CD8-positive, alpha-beta T cell (primary cell): ENCODE measurements at regions of chr2 and their contacts with region 1.

Region 1: DNA sequence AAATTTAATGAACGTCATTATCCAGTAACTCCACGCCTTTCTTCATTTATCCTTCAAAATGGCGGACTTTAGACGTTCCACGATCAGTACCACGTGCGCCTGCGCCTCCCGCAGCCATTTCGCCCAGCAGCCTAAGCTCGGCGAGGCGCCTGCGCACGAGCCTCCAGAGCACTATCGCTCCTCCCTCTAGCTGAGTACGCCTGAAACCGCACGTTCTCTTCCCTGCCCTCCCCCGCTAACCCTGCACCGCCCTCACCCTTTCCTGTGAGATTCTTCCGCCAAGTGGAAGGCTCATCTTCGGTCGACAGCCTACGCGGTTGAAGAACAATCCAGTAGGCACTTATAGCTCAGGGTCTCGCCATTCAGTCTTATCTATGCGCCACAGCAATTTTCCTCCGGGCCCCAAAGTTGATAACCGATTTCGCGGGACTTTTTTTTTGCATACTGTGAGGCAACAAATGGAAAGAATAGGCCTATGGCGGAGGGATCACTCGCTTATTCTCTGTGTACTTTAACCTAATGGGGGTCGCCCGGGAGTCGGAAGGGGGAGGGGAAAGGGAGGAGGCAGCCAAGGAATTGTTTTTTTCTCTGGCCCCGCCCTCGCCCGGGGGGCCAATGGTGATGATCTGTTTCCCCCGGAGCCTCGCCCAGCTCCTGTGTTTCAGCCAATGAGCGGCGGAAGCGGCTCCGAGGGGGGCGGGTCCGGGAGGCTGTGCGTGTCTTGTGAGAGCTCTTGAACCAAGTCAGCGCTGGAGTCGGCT is at the start of gene KDM3A:
- DNase-seq: peak; percentile 98 to 100 (median 99)
- ATAC-seq: peak; percentile 76
- H3K4me3 ChIP-seq: peak within 1 kb of the TSS; percentile 74 to 80
- H3K4me3 Mint-ChIP-seq: peak within 1 kb of the TSS; percentile 97
- H3K27ac ChIP-seq: peak within 1 kb of the TSS; percentile 85 to 91
- H3K27ac Mint-ChIP-seq: peak within 1 kb of the TSS; percentile 99
- H3K4me1 ChIP-seq: peaks cover 31% of the 10 kb centered on the region
- H3K4me1 Mint-ChIP-seq: peaks cover 44% of the 10 kb centered on the region
- H3K27me3 ChIP-seq: no peaks in the 10 kb centered on the region
- H3K27me3 Mint-ChIP-seq: no peaks in the 10 kb centered on the region
- CTCF ChIP-seq: no peak
- total RNA-seq, gene KDM3A: 226 to 227 TPM

Region 2: GRCh38 chr2:86105252-86105968 is 335.4 kb before region 1 on chr2 and contains the start of gene POLR1A:
- CTCF ChIA-PET with region 1: no interaction called
- POLR2A ChIA-PET with region 1: interaction called, 18 read pairs
- intact Hi-C with region 1: loop called in 1 of 2 experiments (anchors 2 kb)
- DNase-seq: peak; percentile 64 to 94 (median 83)
- ATAC-seq: peak; percentile 77
- H3K4me3 ChIP-seq: peak within 1 kb of the TSS; percentile 66 to 92
- H3K4me3 Mint-ChIP-seq: peak within 1 kb of the TSS; percentile 92
- H3K27ac ChIP-seq: peak within 1 kb of the TSS; percentile 80 to 87
- H3K27ac Mint-ChIP-seq: peak within 1 kb of the TSS; percentile 99
- H3K4me1 ChIP-seq: peaks cover 24% of the 10 kb centered on the region
- H3K4me1 Mint-ChIP-seq: peaks cover 66% of the 10 kb centered on the region
- H3K27me3 ChIP-seq: no peaks in the 10 kb centered on the region
- H3K27me3 Mint-ChIP-seq: no peaks in the 10 kb centered on the region
- CTCF ChIP-seq: no peak
- total RNA-seq, gene POLR1A: 12.3 to 15.2 TPM

Region 3: DNA sequence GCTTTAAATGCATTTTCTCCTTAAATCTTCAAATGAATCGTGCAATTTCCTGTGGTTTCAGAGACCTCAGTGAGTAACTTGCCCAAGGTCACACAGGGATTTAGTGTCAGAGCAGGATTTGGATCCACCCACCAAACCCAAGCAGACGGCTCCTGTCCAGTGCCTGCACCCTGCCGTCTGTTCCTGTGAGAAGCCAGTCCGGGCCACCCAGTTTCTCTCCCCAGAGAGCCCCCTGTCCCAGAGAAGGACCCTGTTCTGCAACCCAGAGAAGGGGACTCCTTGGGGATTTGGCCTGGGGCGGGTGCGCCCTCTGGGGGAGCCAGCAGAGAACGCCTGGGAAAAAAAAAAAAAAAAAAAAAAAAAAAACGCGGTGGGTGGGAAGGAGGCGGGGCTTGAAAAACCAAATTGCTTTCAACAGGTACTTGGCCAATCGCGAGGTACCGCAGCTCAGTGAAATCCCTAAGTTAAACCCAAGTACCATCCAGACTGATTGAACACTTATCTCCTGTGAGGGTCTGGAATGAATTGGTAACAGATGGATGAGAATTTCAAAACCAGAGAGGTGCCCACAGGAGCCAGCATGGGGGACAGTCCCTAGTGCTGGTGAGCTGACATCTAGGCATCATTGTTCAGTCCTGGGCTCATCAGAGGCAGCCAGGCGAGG is 72.5 kb before region 1 on chr2:
- CTCF ChIA-PET with region 1: no interaction called
- POLR2A ChIA-PET with region 1: interaction called, 12 read pairs
- intact Hi-C with region 1: loop called in 1 of 2 experiments (anchors 2 kb)
- DNase-seq: peak in 8 of 9 experiments; percentile 20 to 68 (median 34)
- ATAC-seq: peak; percentile 67
- H3K4me3 ChIP-seq: peak overlapping the region in 1 of 2 experiments; percentile 13
- H3K4me3 Mint-ChIP-seq: peak overlapping the region; percentile 67
- H3K27ac ChIP-seq: no peak overlapping the region
- H3K27ac Mint-ChIP-seq: peak overlapping the region; percentile 79
- H3K4me1 ChIP-seq: peaks cover 32% of the 10 kb centered on the region
- H3K4me1 Mint-ChIP-seq: peaks cover 44% of the 10 kb centered on the region
- H3K27me3 ChIP-seq: no peaks in the 10 kb centered on the region
- H3K27me3 Mint-ChIP-seq: no peaks in the 10 kb centered on the region
- CTCF ChIP-seq: peak; percentile 4

Region 4: GRCh38 chr2:86562922-86563649 is 122.3 kb after region 1 on chr2 and contains the start of gene CHMP3:
- CTCF ChIA-PET with region 1: no interaction called
- POLR2A ChIA-PET with region 1: interaction called, 6 read pairs
- intact Hi-C with region 1: loop called (anchors 1 to 2 kb)
- DNase-seq: peak; percentile 92 to 99 (median 95)
- ATAC-seq: peak; percentile 89
- H3K4me3 ChIP-seq: peak within 1 kb of the TSS; percentile 86 to 89
- H3K4me3 Mint-ChIP-seq: peak within 1 kb of the TSS; percentile 95
- H3K27ac ChIP-seq: peak within 1 kb of the TSS; percentile 95 to 99
- H3K27ac Mint-ChIP-seq: peak within 1 kb of the TSS; percentile 99
- H3K4me1 ChIP-seq: peaks cover 36% of the 10 kb centered on the region
- H3K4me1 Mint-ChIP-seq: peaks cover 42% of the 10 kb centered on the region
- H3K27me3 ChIP-seq: no peaks in the 10 kb centered on the region
- H3K27me3 Mint-ChIP-seq: peaks cover 2% of the 10 kb centered on the region
- CTCF ChIP-seq: no peak
- total RNA-seq, gene CHMP3: 61.0 to 63.2 TPM

Region 5: DNA sequence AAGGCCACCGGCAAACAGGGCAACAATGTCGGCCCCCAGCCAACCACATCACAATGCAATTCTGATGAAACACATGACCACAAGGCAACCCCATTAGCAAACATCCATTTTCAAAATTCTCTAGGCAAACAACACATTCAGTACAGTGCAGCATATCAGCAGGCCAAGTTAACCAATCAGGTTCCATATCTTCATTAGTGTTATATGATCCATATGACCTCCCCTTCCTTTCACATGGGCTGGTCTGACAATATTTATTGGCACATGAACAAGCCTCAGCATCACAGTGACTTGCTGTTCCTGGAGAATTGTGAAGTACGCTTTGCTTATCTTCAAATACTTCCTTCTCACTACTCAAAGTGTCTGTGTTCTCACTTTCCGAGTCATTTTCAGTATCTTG is 163.1 kb after region 1 on chr2:
- CTCF ChIA-PET with region 1: no interaction called
- POLR2A ChIA-PET with region 1: no interaction called
- intact Hi-C with region 1: no loop called
- DNase-seq: no peak
- ATAC-seq: no peak
- H3K4me3 ChIP-seq: no peak overlapping the region
- H3K4me3 Mint-ChIP-seq: no peak overlapping the region
- H3K27ac ChIP-seq: no peak overlapping the region
- H3K27ac Mint-ChIP-seq: peak overlapping the region; percentile 6
- H3K4me1 ChIP-seq: no peaks in the 10 kb centered on the region
- H3K4me1 Mint-ChIP-seq: peaks cover 7% of the 10 kb centered on the region
- H3K27me3 ChIP-seq: no peaks in the 10 kb centered on the region
- H3K27me3 Mint-ChIP-seq: no peaks in the 10 kb centered on the region
- CTCF ChIP-seq: no peak

Region 6: DNA sequence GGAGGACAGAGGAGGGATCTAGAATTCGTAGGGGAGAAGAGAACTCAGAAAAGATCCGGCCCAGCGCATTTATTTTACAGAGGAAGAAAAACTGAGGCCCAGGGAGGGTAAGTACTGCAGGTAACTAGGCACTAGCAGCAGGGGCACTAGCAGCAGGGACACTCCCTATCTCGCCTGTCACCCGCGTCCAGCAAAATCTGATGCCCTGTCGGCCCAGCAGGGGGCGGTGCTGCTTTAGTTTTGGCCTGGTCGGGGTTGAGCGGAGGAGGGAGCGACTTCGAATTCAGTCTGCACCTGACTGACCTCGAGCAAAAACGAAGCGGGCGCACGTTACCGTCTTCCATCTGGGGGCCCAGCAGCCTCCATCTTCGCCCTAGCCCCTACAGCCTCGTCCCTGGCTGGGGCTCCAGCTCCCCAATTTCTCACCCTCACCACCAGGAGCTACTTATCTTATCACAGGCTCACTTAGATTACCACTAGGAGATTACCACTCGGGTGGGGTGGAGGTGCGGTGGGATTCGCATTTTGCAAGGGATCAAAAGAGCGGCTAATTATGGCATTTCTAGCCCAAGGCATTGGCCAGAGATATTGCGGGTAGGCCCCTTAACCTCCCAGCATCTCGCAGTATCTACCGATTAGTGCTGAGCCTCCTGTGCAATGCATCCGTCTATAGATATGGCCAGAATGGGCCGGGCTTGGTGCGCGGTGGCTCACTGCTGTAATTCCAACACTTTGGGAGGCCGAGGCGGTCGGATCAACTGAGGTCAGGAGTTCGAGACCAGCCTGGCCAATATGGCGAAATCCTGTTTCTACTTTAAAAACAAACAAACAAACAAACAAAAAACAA is 367.7 kb after region 1 on chr2:
- CTCF ChIA-PET with region 1: no interaction called
- POLR2A ChIA-PET with region 1: interaction called, 10 read pairs
- intact Hi-C with region 1: loop called in 1 of 2 experiments (anchors 5 kb)
- DNase-seq: peak; percentile 93 to 100 (median 97)
- ATAC-seq: peak; percentile 69
- H3K4me3 ChIP-seq: peak overlapping the region; percentile 77 to 78
- H3K4me3 Mint-ChIP-seq: peak overlapping the region; percentile 98
- H3K27ac ChIP-seq: peak overlapping the region; percentile 75 to 78
- H3K27ac Mint-ChIP-seq: peak overlapping the region; percentile 99
- H3K4me1 ChIP-seq: peaks cover 51% of the 10 kb centered on the region
- H3K4me1 Mint-ChIP-seq: peaks cover 71% of the 10 kb centered on the region
- H3K27me3 ChIP-seq: no peaks in the 10 kb centered on the region
- H3K27me3 Mint-ChIP-seq: no peaks in the 10 kb centered on the region
- CTCF ChIP-seq: peak; percentile 79

Region 7: DNA sequence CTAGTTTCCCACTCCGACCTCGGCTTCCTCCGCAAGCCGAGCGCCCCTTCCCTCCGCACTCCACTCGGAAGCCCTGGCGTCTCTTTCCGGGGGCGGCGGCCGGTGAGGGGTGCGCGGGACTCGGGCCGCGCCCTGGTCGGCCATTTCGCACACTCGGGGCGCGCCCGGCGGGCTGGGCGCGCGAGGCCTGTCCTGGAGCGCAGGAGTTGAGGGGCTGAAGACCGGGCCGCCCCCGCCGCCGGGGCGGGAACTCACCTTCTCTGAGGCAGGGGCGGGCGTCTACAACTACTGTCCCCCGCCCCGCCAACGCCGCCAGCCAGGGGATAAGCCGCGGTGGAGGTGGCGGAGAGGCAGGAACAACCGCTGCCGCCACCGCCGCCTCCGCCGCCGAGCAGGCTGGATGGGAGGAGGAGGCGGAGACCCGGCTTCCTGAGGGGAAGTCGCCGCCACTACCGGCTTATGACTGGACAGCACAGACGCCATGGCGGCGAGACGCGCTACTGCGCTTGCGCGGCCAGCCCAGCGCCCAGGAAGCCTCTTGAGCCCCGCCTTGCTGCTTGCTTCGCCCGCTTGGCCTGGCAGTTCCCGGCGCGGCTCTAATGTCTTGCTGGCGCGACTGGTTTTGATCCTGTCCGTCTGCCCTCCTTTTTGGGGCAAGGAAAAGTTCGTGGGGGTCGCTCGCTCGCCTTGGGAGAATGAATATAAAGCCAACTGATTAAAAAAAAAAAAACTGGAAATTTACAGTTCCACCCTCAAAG is 1614.7 kb after region 1 on chr2 and contains the start of gene KRCC1:
- CTCF ChIA-PET with region 1: no interaction called
- POLR2A ChIA-PET with region 1: no interaction called
- intact Hi-C with region 1: loop called in 1 of 2 experiments (anchors 10 kb)
- DNase-seq: peak; percentile 86 to 98 (median 94)
- ATAC-seq: peak; percentile 91
- H3K4me3 ChIP-seq: peak within 1 kb of the TSS; percentile 57 to 84
- H3K4me3 Mint-ChIP-seq: peak within 1 kb of the TSS; percentile 96
- H3K27ac ChIP-seq: peak within 1 kb of the TSS; percentile 80 to 90
- H3K27ac Mint-ChIP-seq: peak within 1 kb of the TSS; percentile 98
- H3K4me1 ChIP-seq: peaks cover 23% of the 10 kb centered on the region
- H3K4me1 Mint-ChIP-seq: peaks cover 54% of the 10 kb centered on the region
- H3K27me3 ChIP-seq: no peaks in the 10 kb centered on the region
- H3K27me3 Mint-ChIP-seq: no peaks in the 10 kb centered on the region
- CTCF ChIP-seq: no peak
- total RNA-seq, gene KRCC1: 3.1 to 3.6 TPM